ENCODE measurements at regions of chr14 and their contacts with region 1.

Region 1: DNA sequence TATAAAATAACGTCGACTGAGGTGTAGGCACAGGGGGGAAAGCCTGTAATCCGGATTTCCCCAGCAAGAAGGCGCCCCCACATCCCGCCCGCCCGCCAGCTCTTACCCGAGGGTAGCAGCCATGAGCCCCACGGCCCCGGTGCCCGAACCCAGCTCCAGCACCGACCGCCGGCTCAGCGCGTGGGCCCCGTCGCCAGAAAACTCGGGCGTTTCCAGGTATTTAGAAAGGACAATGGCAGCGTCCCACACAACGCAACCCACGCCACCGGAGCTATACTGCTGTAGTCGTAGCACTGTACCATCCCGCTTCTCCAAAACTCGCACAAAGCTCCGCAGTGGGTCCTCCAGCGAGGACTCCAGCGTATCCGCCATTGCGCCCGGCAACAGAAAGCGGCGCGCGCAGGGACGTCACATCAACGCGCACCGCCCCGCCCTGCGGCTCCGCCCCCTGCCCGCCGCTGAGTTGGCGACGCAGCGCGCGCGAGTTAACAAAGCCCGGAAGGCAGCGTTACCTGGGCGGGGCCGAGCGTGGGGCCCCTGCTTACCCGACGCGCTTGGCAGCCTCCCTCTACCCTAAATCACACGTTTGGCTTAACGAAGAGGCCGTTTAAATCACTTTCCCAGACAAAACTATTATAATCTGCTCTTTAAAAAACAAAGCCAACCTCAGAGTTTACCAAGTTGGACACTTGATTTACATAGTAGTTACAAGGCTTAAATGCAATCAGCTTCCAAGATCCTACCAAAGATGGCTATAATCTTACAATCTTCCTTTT is at the start of gene VCPKMT:
- DNase-seq: peak; percentile 90

Region 2: GRCh38 chr14:49852301-49853157 is 263.8 kb before region 1 on chr14 and contains the start of gene NEMF:
- in situ Hi-C with region 1: loop called (anchors 25 kb)
- DNase-seq: peak; percentile 88

Measured in ACHN (cell line).